Activated CD4-positive, alpha-beta T cell treated with anti-CD3 and anti-CD28 coated beads for 36 hours (primary cell): ENCODE measurements at regions of chr2 and their contacts with region 1.

Region 1: GRCh38 chr2:10832203-10832936 is 19.8 kb upstream of the PDIA6 start:
- DNase-seq: peak; percentile 93
- ATAC-seq: peak; percentile 91
- H3K4me3 Mint-ChIP-seq: no peak overlapping the region
- H3K27ac Mint-ChIP-seq: no peak overlapping the region
- H3K4me1 Mint-ChIP-seq: peaks cover 7% of the 10 kb centered on the region
- H3K27me3 Mint-ChIP-seq: peaks cover 9% of the 10 kb centered on the region

Region 2: DNA sequence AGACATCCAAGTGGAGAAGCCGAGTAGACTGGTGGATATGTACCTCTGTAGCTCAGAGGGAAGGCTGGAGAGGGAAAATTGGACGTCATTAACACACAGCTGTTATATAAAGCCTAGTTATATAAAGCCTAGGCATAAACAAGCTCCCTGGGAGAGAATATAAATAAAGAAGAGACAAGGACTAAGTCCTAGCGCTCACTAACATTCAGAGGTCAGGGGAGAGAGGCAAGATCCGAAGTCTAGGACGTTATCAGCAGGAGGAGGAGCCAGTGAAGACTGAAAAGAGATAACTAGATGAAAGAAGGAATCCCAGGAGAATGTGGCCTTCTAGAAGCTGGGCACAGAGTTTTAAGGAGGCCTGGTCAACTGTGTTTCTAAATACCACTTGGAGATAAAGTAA is 197.9 kb before region 1 on chr2:
- CTCF ChIA-PET with region 1: no interaction called
- POLR2A ChIA-PET with region 1: no interaction called
- intact Hi-C with region 1: no loop called
- DNase-seq: no peak
- ATAC-seq: no peak
- H3K4me3 Mint-ChIP-seq: no peak overlapping the region
- H3K27ac Mint-ChIP-seq: no peak overlapping the region
- H3K4me1 Mint-ChIP-seq: peaks cover 11% of the 10 kb centered on the region
- H3K27me3 Mint-ChIP-seq: no peaks in the 10 kb centered on the region

Region 3: DNA sequence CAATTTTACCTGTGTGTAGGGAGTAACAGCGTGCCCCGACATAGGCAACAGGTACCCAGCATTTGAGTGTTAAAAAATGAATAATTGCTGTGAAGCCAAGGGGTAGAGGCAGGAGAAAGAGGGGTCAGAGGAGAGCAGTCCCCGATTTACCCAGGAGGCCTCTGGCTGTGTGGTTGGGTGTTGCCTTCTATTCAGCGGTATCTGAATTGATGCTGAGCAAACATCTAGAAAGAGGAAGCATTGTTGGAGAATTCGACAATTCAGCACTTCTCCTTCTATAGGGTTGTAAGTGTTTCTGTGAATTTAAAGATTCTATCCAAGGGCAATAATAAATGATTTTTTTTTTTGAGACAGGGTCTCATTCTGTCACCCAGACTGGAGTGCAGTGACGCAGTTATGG is 11.1 kb before region 1 on chr2:
- CTCF ChIA-PET with region 1: interaction called, 16 read pairs
- POLR2A ChIA-PET with region 1: no interaction called
- intact Hi-C with region 1: no loop called
- DNase-seq: no peak
- ATAC-seq: no peak
- H3K4me3 Mint-ChIP-seq: no peak overlapping the region
- H3K27ac Mint-ChIP-seq: no peak overlapping the region
- H3K4me1 Mint-ChIP-seq: no peaks in the 10 kb centered on the region
- H3K27me3 Mint-ChIP-seq: peaks cover 13% of the 10 kb centered on the region

Region 4: GRCh38 chr2:10864861-10865636 is 32.7 kb after region 1 on chr2:
- CTCF ChIA-PET with region 1: interaction called, 10 read pairs
- POLR2A ChIA-PET with region 1: no interaction called
- intact Hi-C with region 1: no loop called
- DNase-seq: peak; percentile 65
- ATAC-seq: peak; percentile 97
- H3K4me3 Mint-ChIP-seq: no peak overlapping the region
- H3K27ac Mint-ChIP-seq: no peak overlapping the region
- H3K4me1 Mint-ChIP-seq: peaks cover 33% of the 10 kb centered on the region
- H3K27me3 Mint-ChIP-seq: peaks cover 19% of the 10 kb centered on the region

Region 5: GRCh38 chr2:10900216-10901109 is 68.1 kb after region 1 on chr2:
- CTCF ChIA-PET with region 1: interaction called, 8 read pairs
- POLR2A ChIA-PET with region 1: no interaction called
- intact Hi-C with region 1: loop called (anchors 1 to 2 kb)
- DNase-seq: peak; percentile 39
- ATAC-seq: peak; percentile 30
- H3K4me3 Mint-ChIP-seq: no peak overlapping the region
- H3K27ac Mint-ChIP-seq: no peak overlapping the region
- H3K4me1 Mint-ChIP-seq: no peaks in the 10 kb centered on the region
- H3K27me3 Mint-ChIP-seq: peaks cover 4% of the 10 kb centered on the region

Region 6: DNA sequence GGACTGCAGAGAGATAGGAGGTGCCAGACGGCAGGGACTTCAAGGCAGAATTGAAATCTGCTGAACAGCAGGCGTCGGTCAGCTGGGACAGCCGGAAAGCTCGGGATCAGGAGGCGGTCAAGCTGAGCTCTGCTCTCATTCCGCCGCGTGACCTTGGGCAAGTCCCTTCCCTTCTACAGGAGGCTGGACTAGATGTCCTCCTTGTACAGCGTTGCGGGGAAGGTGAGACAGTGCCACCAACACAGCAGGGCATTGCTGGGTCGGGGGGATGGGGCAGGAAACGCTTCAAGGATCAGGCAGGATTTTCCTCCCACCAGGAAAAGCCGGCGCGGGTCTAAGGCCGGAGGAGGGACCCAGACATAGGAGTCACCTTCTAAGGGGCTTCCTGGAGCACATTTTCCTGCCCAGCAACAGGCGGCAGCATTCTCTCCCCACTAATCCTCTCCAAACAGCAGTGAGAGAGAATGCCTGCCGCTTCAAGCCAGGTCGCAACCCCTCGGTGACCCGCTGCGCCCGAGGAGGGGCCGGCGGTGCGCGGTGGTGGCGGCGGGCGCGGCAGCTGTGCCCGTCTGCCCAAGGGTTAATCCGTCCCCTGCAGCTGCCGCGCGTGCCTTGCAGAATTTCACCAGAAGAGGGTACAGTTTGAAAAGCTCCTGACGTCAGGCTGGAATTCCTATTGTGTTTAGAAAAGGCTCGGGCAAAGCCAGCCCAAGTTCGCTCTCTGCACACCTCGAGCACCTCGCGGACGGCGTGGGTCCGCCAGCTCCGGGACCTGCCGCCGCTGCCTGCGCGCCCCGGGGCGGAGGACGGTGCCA is 79.1 kb after region 1 on chr2 and contains the start of gene KCNF1:
- CTCF ChIA-PET with region 1: interaction called, 10 read pairs
- POLR2A ChIA-PET with region 1: no interaction called
- intact Hi-C with region 1: loop called in 1 of 2 experiments (anchors 2 kb)
- DNase-seq: peak; percentile 17
- ATAC-seq: peak; percentile 19
- H3K4me3 Mint-ChIP-seq: no peak within 1 kb of the TSS
- H3K27ac Mint-ChIP-seq: no peak within 1 kb of the TSS
- H3K4me1 Mint-ChIP-seq: peaks cover 2% of the 10 kb centered on the region
- H3K27me3 Mint-ChIP-seq: peaks cover 27% of the 10 kb centered on the region
- total RNA-seq, gene KCNF1: not detected

Region 7: GRCh38 chr2:11004199-11004598 is 171.8 kb after region 1 on chr2:
- CTCF ChIA-PET with region 1: no interaction called
- POLR2A ChIA-PET with region 1: no interaction called
- intact Hi-C with region 1: no loop called
- DNase-seq: no peak
- ATAC-seq: no peak
- H3K4me3 Mint-ChIP-seq: no peak overlapping the region
- H3K27ac Mint-ChIP-seq: no peak overlapping the region
- H3K4me1 Mint-ChIP-seq: no peaks in the 10 kb centered on the region
- H3K27me3 Mint-ChIP-seq: peaks cover 7% of the 10 kb centered on the region

Region 8: GRCh38 chr2:11124503-11125068 is 292.2 kb after region 1 on chr2:
- CTCF ChIA-PET with region 1: interaction called, 129 read pairs
- POLR2A ChIA-PET with region 1: no interaction called
- intact Hi-C with region 1: loop called (anchors 1 kb)
- DNase-seq: peak; percentile 88
- ATAC-seq: peak; percentile 89
- H3K4me3 Mint-ChIP-seq: no peak overlapping the region
- H3K27ac Mint-ChIP-seq: no peak overlapping the region
- H3K4me1 Mint-ChIP-seq: peaks cover 3% of the 10 kb centered on the region
- H3K27me3 Mint-ChIP-seq: no peaks in the 10 kb centered on the region

Region 9: GRCh38 chr2:11446733-11447248 is 614.4 kb after region 1 on chr2:
- CTCF ChIA-PET with region 1: no interaction called
- POLR2A ChIA-PET with region 1: no interaction called
- intact Hi-C with region 1: loop called in 1 of 2 experiments (anchors 2 kb)
- DNase-seq: peak; percentile 62
- ATAC-seq: peak; percentile 66
- H3K4me3 Mint-ChIP-seq: no peak overlapping the region
- H3K27ac Mint-ChIP-seq: no peak overlapping the region
- H3K4me1 Mint-ChIP-seq: no peaks in the 10 kb centered on the region
- H3K27me3 Mint-ChIP-seq: no peaks in the 10 kb centered on the region